ENCODE measurements at regions of chr12 and their contacts with region 1.

Region 1: GRCh38 chr12:24838531-24838950 is 110.4 kb downstream of the BCAT1 start:
- DNase-seq: peak; percentile 79
- H3K4me3 Mint-ChIP-seq: peak overlapping the region; percentile 6
- H3K27ac Mint-ChIP-seq: peak overlapping the region; percentile 77
- H3K4me1 Mint-ChIP-seq: peaks cover 40% of the 10 kb centered on the region
- H3K27me3 Mint-ChIP-seq: no peaks in the 10 kb centered on the region
- CTCF ChIP-seq: no peak

Region 2: DNA sequence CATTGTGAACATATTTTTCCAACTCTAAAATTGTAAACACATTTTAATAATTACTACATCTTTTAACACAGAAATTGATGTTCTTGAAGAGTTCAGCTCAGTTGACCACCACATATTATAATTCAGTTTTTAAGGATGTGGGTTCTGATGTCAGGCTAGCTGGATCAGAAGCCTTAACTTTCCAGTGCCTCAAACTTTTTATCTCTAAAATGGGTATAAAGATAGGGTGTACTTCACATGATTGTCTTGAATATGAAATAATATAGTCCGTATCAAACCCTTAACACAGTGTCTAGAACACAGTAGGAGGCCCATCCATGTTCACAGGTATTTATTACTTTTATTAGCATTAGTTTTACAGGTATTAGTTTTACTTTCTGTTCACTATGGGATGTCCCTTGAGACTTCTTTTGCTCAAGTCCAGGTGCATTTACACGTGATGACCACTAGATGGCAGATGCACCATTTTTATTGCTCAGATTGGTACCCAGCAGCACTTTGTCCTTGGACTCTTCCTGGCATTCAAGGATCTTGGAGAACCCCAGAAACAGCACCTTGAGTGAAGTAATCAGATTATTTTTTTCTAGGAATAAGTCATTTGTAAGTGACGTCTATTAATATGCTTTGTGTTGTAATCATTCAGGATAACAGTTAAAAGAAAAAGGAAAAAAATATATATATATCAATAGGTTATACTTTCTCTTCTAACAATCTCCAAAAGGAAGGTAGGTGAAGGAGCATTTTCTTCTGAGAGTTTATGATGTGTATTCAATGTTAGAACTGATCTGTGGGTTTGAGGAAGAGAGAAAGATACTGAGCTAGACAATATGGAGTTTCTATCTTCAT is 1633.4 kb before region 1 on chr12:
- CTCF ChIA-PET with region 1: interaction called, 3 read pairs
- POLR2A ChIA-PET with region 1: no interaction called
- intact Hi-C with region 1: loop called (anchors 1 kb)
- DNase-seq: peak; percentile 58
- H3K4me3 Mint-ChIP-seq: no peak overlapping the region
- H3K27ac Mint-ChIP-seq: no peak overlapping the region
- H3K4me1 Mint-ChIP-seq: peaks cover 9% of the 10 kb centered on the region
- H3K27me3 Mint-ChIP-seq: peaks cover 37% of the 10 kb centered on the region
- CTCF ChIP-seq: peak; percentile 84

Region 3: GRCh38 chr12:24012528-24012927 is 826.0 kb before region 1 on chr12:
- CTCF ChIA-PET with region 1: interaction called, 3 read pairs
- POLR2A ChIA-PET with region 1: no interaction called
- intact Hi-C with region 1: loop called (anchors 10 kb)
- DNase-seq: peak; percentile 54
- H3K4me3 Mint-ChIP-seq: no peak overlapping the region
- H3K27ac Mint-ChIP-seq: no peak overlapping the region
- H3K4me1 Mint-ChIP-seq: no peaks in the 10 kb centered on the region
- H3K27me3 Mint-ChIP-seq: no peaks in the 10 kb centered on the region
- CTCF ChIP-seq: peak; percentile 54

Region 4: GRCh38 chr12:24360907-24361306 is 477.6 kb before region 1 on chr12:
- CTCF ChIA-PET with region 1: interaction called, 3 read pairs
- POLR2A ChIA-PET with region 1: no interaction called
- intact Hi-C with region 1: loop called (anchors 10 kb)
- DNase-seq: no peak
- H3K4me3 Mint-ChIP-seq: no peak overlapping the region
- H3K27ac Mint-ChIP-seq: no peak overlapping the region
- H3K4me1 Mint-ChIP-seq: peaks cover 15% of the 10 kb centered on the region
- H3K27me3 Mint-ChIP-seq: no peaks in the 10 kb centered on the region
- CTCF ChIP-seq: no peak

Region 5: DNA sequence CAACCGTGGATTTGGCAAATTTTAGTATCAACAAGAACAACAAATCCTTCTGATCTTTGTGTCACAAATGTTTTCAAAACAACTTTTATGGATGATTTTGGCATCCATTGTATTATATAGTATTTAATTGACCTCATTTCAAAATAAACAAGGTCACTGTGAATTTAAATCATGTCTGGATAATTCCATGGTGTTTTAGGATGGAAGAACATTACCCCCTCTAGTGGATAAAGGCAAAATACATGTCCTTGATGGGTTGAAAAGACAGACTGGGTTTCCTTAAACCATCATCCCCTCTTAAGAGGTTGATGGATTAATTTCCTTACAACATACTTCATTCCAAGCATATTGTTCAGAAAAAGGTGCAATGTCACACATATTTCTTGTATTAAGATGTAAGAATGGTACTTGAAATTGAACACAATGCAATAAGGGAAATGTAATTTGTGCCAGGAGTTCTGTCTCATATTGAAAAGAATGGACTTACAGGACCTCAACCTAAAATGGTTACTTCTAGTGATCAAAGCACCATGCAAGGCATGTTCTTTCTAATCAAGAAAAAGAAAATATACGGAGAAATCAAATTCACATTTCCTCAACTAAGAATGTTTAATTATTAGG is 241.7 kb before region 1 on chr12:
- CTCF ChIA-PET with region 1: no interaction called
- POLR2A ChIA-PET with region 1: no interaction called
- intact Hi-C with region 1: loop called (anchors 10 kb)
- DNase-seq: peak; percentile 54
- H3K4me3 Mint-ChIP-seq: no peak overlapping the region
- H3K27ac Mint-ChIP-seq: no peak overlapping the region
- H3K4me1 Mint-ChIP-seq: peaks cover 6% of the 10 kb centered on the region
- H3K27me3 Mint-ChIP-seq: peaks cover 22% of the 10 kb centered on the region
- CTCF ChIP-seq: peak; percentile 53

Region 6: GRCh38 chr12:24728366-24728765 is 110.2 kb before region 1 on chr12:
- CTCF ChIA-PET with region 1: no interaction called
- POLR2A ChIA-PET with region 1: no interaction called
- intact Hi-C with region 1: loop called (anchors 2 kb)
- DNase-seq: peak; percentile 45
- H3K4me3 Mint-ChIP-seq: no peak overlapping the region
- H3K27ac Mint-ChIP-seq: no peak overlapping the region
- H3K4me1 Mint-ChIP-seq: no peaks in the 10 kb centered on the region
- H3K27me3 Mint-ChIP-seq: no peaks in the 10 kb centered on the region
- CTCF ChIP-seq: peak; percentile 52

Region 7: GRCh38 chr12:24852420-24852819 is 13.9 kb after region 1 on chr12:
- CTCF ChIA-PET with region 1: interaction called, 20 read pairs
- POLR2A ChIA-PET with region 1: interaction called, 6 read pairs
- intact Hi-C with region 1: no loop called
- DNase-seq: no peak
- H3K4me3 Mint-ChIP-seq: no peak overlapping the region
- H3K27ac Mint-ChIP-seq: no peak overlapping the region
- H3K4me1 Mint-ChIP-seq: peaks cover 18% of the 10 kb centered on the region
- H3K27me3 Mint-ChIP-seq: no peaks in the 10 kb centered on the region
- CTCF ChIP-seq: peak; percentile 42

Measured in MCF 10A (cell line).